OCI-LY7 (cell line): ENCODE measurements at regions of chr1 and their contacts with region 1.

Region 1: DNA sequence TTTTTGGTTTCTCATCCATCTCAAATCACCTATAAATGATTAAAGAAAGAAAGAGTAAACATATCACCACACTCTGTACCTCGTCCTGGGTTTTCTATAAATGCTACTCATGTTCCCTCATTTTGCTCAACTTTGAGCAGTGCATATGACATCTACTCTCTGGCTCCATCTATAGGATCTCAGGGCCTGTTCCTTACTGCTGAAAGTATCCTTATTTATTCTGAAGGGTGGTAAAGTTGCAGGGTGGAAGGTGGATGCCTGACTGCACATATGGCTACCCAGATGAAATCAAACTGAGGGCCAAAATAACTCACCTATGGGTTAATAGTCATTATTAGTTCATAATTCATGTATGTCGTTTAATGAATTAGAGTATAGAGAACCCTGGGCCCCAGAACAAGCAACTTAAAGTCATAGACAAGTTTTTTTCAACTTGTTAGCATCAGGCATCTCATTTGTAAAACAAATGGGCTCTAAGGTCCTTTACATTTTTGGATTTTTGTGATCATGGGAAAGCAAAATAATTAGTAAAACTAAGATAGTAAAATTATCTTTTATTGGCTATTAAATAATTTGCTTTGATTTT is 46.5 kb downstream of the NCF2 start:
- DNase-seq: peak; percentile 67
- H3K4me3 ChIP-seq: no peak overlapping the region
- H3K27ac ChIP-seq: no peak overlapping the region
- H3K4me1 ChIP-seq: peaks cover 54% of the 10 kb centered on the region
- CTCF ChIP-seq: peak; percentile 87

Region 2: GRCh38 chr1:182781841-182782586 is 761.7 kb before region 1 on chr1:
- CTCF ChIA-PET with region 1: no interaction called
- POLR2A ChIA-PET with region 1: no interaction called
- intact Hi-C with region 1: no loop called
- DNase-seq: peak; percentile 86
- H3K4me3 ChIP-seq: no peak overlapping the region
- H3K27ac ChIP-seq: no peak overlapping the region
- H3K4me1 ChIP-seq: peaks cover 31% of the 10 kb centered on the region
- CTCF ChIP-seq: peak; percentile 98

Region 3: DNA sequence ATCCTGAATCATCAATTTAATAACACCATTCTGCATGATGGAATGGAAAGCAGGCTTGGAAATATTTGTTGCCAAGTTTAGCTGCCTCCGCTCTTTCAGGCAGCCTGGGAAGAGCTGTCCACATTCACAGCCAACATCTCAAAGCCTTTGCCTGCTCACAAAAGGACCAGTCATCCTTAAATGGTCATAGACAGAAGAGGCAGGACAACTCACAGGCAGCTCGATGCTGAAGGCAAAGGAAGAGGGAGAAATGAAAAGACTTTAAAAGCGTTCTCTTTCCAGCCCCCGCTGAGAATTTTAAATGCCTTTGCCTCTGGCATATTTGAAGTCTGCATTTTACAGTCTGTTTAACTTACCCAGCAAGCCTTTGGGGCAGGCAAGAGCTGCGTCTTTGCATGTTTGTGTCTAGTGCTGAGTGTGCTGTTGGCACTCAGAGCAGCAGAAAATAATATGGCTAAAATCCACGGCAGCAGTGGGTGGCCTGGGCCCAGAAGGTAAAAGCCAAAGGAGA is 194.5 kb before region 1 on chr1:
- CTCF ChIA-PET with region 1: no interaction called
- POLR2A ChIA-PET with region 1: no interaction called
- intact Hi-C with region 1: no loop called
- DNase-seq: no peak
- H3K4me3 ChIP-seq: no peak overlapping the region
- H3K27ac ChIP-seq: no peak overlapping the region
- H3K4me1 ChIP-seq: no peaks in the 10 kb centered on the region
- CTCF ChIP-seq: no peak

Region 4: DNA sequence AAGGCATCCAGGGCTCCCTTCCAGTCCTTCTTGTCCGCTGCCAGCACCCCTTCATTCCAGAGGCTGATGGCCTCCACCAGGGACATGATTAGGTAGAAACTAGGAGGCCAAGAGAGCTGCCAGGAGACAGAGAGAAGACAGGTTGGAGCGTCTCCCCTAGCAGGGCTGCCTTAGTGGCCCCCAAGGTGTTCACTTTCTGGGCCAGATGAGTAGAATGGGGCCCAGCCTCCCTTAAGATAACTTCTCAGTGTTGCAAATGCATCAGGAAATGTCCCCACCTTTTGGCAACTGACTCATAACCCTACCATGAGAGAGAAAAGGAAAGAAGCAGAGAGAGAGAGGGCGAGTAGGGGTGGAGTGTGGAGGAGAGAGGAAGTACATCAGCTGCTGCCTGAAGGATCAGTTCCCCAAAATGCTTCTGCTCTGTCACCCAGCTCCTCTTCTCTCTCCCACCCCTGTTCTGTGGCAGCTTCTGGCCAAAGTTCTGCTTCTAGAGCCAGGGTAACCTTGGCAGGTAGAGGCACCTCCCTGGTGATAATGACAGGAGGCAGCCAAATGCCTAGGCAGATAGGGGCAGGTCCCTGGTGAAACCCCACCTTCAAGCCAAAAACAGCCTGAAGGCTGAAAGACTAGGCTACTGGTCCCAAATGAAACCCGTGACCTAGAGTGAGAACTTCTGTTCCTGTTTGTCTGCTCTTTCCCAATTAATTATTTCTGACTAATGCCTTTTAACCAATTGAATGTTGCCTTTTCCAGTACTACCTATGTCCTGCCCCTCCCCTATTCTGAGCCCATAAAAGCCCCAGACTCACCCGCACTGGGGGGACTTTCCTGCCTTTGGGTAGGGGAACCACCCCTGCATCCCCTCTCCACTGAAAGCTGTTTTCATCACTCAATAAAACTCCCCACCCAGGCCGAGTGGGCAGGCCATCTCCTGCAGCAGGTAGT is 46.8 kb after region 1 on chr1 and contains the start of gene NCF2:
- CTCF ChIA-PET with region 1: no interaction called
- POLR2A ChIA-PET with region 1: interaction called, 3 read pairs
- intact Hi-C with region 1: loop called (anchors 2 kb)
- DNase-seq: peak; percentile 89
- H3K4me3 ChIP-seq: peak within 1 kb of the TSS; percentile 62
- H3K27ac ChIP-seq: peak within 1 kb of the TSS; percentile 95
- H3K4me1 ChIP-seq: peaks cover 69% of the 10 kb centered on the region
- CTCF ChIP-seq: peak; percentile 31; the same call in 1 of the 2 replicates
- total RNA-seq, gene NCF2: 4.0 and 5.0 TPM in 2 replicates

Region 5: DNA sequence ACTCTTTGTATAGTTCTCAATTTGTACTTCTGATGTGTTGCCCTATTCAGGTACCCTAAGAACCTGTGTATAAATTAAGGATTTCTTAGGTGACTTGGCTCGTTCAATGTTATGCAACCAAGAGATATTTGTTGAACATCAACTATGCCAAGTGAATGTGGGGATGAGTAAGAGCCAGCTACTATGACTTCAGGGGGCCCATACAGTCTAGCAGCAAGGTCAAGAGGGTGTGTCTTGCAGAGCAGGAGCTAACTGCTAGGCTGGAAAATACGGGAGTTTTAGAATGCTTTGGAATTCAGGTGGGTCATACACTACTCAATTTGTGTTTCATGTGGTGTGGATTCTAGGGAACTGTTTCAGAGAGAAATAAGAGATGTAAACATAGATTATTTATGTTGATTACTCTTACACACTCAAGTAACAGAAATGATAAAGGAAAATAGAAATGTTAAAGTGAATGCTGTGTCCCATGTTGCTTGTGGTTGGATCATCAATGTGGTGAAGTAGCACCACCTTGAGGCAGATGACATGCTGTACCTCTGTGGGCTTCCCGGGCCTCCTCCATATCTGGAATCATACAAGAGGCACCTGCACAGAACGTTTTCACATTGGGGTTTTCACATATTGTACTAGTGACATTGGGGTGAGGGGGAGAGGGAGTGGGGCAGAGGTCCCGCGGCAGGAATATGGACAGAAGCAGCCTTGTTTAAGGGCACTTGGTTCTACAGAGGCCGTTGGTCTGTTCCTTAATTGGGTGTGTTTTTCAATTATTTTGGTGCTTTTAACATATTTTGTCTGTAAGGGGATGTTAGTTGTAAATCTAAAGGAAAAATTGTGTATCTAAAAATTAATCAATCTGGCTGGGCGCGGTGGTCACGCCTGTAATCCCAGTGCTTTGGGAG is 79.4 kb after region 1 on chr1:
- CTCF ChIA-PET with region 1: no interaction called
- POLR2A ChIA-PET with region 1: interaction called, 3 read pairs
- intact Hi-C with region 1: loop called (anchors 2 kb)
- DNase-seq: peak; percentile 82
- H3K4me3 ChIP-seq: no peak overlapping the region
- H3K27ac ChIP-seq: no peak overlapping the region
- H3K4me1 ChIP-seq: peaks cover 24% of the 10 kb centered on the region
- CTCF ChIP-seq: peak; percentile 97